ENCODE measurements at regions of chr19 and their contacts with region 1.

Region 1: DNA sequence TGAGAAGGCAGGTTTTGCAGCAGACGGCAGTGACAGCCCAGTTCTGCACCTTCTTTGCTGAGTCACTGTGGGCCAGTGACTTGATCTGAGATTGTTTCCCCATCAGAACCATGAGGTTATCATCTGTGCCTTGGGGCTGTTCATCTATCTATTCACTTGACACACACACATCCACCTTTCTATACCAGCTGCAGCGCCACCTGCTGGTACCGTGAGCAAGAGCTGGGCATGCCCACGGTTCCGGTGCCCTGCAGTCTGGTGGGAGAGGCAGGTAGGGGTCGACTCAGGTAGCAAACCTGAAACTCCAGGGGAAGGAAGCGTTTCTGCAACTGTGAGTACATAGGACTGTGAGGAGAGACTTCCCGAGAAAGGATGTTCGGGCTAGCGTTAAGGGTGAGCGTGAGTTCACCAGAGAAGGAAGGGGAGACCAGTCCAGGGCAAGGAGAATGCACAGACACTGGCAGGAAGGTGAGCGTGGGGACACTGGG is 7.5 kb upstream of the LIN7B start:
- DNase-seq: no peak
- CTCF ChIP-seq: peak; percentile 77

Region 2: GRCh38 chr19:49085020-49085867 is 21.4 kb before region 1 on chr19 and contains the start of gene SNRNP70:
- CTCF ChIA-PET with region 1: interaction called, 10 read pairs
- POLR2A ChIA-PET with region 1: no interaction called
- DNase-seq: peak; percentile 99
- CTCF ChIP-seq: no peak

Region 3: DNA sequence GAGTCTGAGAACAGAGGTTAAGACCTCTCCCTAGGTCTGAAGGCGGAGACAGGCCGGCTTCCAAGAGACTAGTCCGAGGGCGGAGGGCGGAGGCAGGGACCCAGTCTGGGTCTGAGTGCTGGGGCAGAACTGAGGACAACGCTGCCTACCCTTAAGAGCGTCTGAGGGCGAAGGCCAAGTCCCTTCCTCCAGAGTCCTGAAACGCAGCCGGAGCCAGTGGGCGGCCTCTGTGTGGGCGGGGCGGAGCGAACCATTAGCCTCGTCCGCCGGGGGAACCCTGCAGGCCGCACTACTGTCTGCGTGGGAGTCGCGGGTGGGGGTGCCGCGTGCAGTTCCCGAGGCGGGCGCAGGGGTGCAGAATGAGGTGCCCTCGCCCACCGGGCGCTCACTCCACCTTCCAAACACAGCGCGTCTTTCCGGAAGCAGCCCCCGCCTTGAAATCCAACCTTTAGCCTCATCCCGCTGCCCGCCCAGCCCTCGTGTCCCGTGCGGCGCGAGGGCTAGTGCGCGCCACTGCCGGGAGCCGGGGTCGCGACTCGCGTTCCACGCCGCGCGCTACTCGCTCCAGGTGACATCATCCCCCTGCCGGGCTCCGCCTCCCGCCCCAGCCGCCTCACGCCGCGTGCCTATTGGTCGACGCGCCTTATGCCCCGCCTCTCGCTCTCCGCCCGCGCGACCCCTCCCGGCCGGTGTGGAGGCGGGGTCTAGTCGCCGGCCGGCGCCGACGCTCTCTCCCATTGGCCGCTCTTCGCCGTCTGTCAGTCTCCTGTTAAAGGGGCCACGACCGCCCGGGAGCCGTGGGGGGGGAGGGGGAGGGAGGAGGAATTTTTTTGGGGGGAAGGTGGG is 12.1 kb after region 1 on chr19 and contains the start of gene C19orf73:
- CTCF ChIA-PET with region 1: interaction called, 15 read pairs
- POLR2A ChIA-PET with region 1: no interaction called
- DNase-seq: peak; percentile 99
- CTCF ChIP-seq: no peak

Region 4: DNA sequence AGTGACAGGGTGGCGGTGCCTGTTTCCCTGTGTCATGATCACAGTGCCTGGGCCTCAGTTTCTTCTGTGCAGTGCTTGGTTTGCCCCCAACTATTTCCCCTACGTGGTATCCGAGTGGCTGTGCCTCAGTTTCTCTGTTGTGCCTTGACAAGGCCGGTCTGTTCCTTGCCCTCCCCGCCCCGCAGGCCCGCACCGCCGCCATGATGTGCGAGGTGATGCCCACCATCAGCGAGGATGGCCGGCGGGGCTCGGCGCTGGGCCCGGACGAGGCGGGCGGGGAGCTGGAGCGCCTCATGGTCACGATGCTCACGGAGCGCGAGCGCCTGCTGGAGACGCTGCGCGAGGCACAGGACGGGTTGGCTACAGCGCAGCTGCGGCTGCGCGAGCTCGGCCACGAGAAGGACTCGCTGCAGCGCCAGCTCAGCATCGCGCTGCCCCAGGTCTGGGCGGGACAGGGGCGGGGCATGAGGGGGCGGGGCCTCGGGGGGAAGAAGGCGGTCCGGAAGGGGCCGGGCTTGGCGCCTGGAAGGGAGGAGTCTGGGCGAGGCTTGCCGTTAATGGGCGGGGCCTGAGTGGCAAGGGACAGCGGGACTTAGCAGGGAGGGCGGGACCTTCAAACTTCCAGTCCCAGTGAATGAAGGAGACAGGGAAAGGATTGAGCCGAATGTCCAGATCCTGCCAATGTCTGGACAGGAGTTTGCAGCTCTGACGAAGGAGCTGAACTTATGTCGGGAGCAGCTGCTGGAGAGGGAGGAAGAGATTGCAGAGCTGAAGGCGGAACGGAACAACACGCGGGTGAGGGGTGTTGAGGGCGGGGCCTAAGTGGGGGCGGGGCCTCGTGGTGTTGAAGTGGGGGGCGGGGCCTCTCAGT is 21.2 kb after region 1 on chr19:
- CTCF ChIA-PET with region 1: interaction called, 15 read pairs
- POLR2A ChIA-PET with region 1: no interaction called
- DNase-seq: peak; percentile 99
- CTCF ChIP-seq: no peak